ENCODE measurements at regions of chr17 and their contacts with region 1.

Region 1: GRCh38 chr17:19424934-19425868 is 14.2 kb downstream of the RNF112 start:
- DNase-seq: no peak
- H3K4me3 ChIP-seq: no peak overlapping the region
- H3K27ac ChIP-seq: peak overlapping the region; percentile 51 to 79
- H3K4me1 ChIP-seq: no peaks in the 10 kb centered on the region
- H3K27me3 ChIP-seq: no peaks in the 10 kb centered on the region
- CTCF ChIP-seq: no peak
- POLR2A ChIP-seq: no peak

Region 2: GRCh38 chr17:18139498-18140286 is 1285.5 kb before region 1 on chr17:
- intact Hi-C with region 1: loop called (anchors 5 kb)
- DNase-seq: no peak
- H3K4me3 ChIP-seq: no peak overlapping the region
- H3K27ac ChIP-seq: no peak overlapping the region
- H3K4me1 ChIP-seq: no peaks in the 10 kb centered on the region
- H3K27me3 ChIP-seq: no peaks in the 10 kb centered on the region
- CTCF ChIP-seq: no peak
- POLR2A ChIP-seq: no peak

Region 3: DNA sequence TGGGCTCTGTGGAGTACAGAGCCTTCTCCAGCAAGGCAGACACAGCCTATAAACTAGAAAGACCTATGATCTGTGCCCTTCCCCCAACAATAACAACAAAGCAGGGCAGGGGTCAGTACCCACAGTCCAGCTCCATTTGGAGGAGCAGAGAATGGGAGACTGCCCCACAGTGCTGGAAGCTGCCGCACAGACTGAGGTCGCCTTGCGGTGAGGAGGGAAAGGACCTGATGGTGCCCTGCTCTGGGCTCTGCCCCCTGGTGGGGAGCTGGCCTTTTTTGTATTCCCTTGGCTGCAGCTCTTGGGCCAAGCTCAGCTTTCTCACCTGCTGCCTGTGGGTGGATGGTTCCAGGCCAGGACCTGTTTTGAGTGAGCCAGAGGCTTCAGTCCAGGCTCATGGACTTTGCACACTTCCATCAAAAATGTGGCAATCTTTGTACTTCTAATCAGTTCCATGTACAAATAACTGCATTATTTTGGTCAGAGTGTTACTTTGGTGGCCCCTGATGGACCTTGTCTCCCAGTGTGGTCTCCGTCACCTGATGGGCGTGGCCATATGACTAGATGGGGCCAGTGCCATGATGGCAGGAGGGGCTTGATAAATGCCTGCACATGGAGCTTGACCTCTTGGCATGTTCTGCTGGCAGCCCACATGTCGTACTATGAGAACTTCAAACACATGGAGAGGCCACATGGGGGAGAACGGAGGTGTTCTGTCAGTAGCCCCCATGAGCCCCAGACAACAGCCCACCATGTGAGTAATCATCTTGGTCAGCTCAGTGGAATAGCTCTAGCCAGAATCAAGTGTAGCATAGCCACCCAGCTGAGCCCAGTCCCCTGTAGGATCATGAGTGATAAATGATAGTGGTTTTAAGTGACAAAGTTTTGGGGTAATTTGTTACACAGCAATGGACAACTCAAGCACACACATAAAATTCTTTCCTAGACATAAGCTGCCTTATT is 86.9 kb before region 1 on chr17:
- intact Hi-C with region 1: no loop called
- DNase-seq: peak; percentile 57 to 78
- H3K4me3 ChIP-seq: no peak overlapping the region
- H3K27ac ChIP-seq: peak overlapping the region; percentile 11 to 57
- H3K4me1 ChIP-seq: peaks cover 0 to 7% of the 10 kb centered on the region in 2 donors
- H3K27me3 ChIP-seq: no peaks in the 10 kb centered on the region
- CTCF ChIP-seq: peak; percentile 69 to 87 (median 69)
- POLR2A ChIP-seq: no peak

Region 4: GRCh38 chr17:19398301-19399181 is 26.7 kb before region 1 on chr17:
- intact Hi-C with region 1: no loop called
- DNase-seq: no peak
- H3K4me3 ChIP-seq: no peak overlapping the region
- H3K27ac ChIP-seq: peak overlapping the region; percentile 81 to 85
- H3K4me1 ChIP-seq: no peaks in the 10 kb centered on the region
- H3K27me3 ChIP-seq: no peaks in the 10 kb centered on the region
- CTCF ChIP-seq: no peak
- POLR2A ChIP-seq: no peak

Measured in breast epithelium (tissue), 4 donors.